Endothelial cell of umbilical vein (primary cell): ENCODE measurements at regions of chr12 and their contacts with region 1.

Region 1: GRCh38 chr12:109385339-109386067 is 37.8 kb downstream of the MYO1H start:
- DNase-seq: peak; percentile 58
- H3K4me3 ChIP-seq: no peak overlapping the region
- H3K27ac ChIP-seq: no peak overlapping the region
- H3K4me1 ChIP-seq: no peaks in the 10 kb centered on the region
- H3K27me3 ChIP-seq: peaks cover 2 to 8% of the 10 kb centered on the region in 2 experiments
- CTCF ChIP-seq: peak; percentile 16 to 23
- POLR2A ChIP-seq: no peak

Region 2: DNA sequence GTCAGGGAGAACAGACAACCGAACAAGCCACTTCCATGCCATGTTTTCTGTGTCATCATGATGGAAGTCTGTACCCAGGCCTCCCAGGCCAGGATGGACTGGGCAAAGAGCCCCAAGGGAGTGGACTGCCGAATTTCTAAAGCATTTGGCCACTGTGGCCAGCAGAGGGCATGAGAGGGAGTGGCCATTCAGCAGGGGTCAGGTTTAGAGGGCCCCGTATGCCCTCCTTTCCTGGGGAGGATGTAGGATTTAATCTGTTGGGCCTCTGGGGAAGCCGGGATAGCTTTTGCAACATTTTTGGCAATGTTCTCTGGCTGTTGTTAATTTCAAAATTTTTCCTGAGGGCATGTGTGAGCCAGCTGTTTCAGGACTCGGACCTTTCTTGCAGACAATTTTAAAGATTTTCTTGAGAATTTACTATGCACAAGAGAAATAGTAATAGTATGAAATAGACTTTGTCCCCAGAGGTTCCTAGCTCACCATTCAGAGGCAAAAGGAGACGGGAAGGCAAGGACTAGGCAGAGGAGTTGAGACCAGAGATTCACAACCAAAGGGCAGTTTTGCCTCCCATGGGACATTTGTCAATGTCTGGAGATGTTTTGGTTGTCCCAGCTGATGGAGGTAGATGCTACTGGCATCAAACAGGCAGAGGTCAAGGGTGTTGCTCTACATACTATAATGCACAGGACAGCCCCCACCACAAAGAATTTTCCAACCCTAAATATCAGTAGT is 251.2 kb before region 1 on chr12:
- CTCF ChIA-PET with region 1: interaction called, 12 read pairs
- POLR2A ChIA-PET with region 1: no interaction called
- dilution Hi-C with region 1: no loop called
- intact Hi-C with region 1: loop called (anchors 2 kb)
- DNase-seq: no peak
- H3K4me3 ChIP-seq: no peak overlapping the region
- H3K27ac ChIP-seq: no peak overlapping the region
- H3K4me1 ChIP-seq: no peaks in the 10 kb centered on the region
- H3K27me3 ChIP-seq: no peaks in the 10 kb centered on the region
- CTCF ChIP-seq: peak; percentile 45 to 63
- POLR2A ChIP-seq: no peak

Region 3: GRCh38 chr12:109264095-109264942 is 121.2 kb before region 1 on chr12:
- CTCF ChIA-PET with region 1: interaction called, 190 read pairs
- POLR2A ChIA-PET with region 1: no interaction called
- dilution Hi-C with region 1: no loop called
- intact Hi-C with region 1: loop called (anchors 1 kb)
- DNase-seq: peak; percentile 40
- H3K4me3 ChIP-seq: no peak overlapping the region
- H3K27ac ChIP-seq: no peak overlapping the region
- H3K4me1 ChIP-seq: no peaks in the 10 kb centered on the region
- H3K27me3 ChIP-seq: no peaks in the 10 kb centered on the region
- CTCF ChIP-seq: peak; percentile 86 to 91
- POLR2A ChIP-seq: no peak

Region 4: GRCh38 chr12:109269428-109269827 is 116.1 kb before region 1 on chr12:
- CTCF ChIA-PET with region 1: interaction called, 190 read pairs
- POLR2A ChIA-PET with region 1: interaction called, 5 read pairs
- dilution Hi-C with region 1: no loop called
- intact Hi-C with region 1: loop called (anchors 1 kb)
- DNase-seq: no peak
- H3K4me3 ChIP-seq: no peak overlapping the region
- H3K27ac ChIP-seq: no peak overlapping the region
- H3K4me1 ChIP-seq: no peaks in the 10 kb centered on the region
- H3K27me3 ChIP-seq: no peaks in the 10 kb centered on the region
- CTCF ChIP-seq: no peak
- POLR2A ChIP-seq: no peak